ENCODE measurements at regions of chr7 and their contacts with region 1.

Region 1: GRCh38 chr7:38858259-38859165 is 50.5 kb downstream of the VPS41 start:
- DNase-seq: no peak
- ATAC-seq: no peak
- H3K4me3 ChIP-seq: no peak overlapping the region
- H3K4me3 Mint-ChIP-seq: no peak overlapping the region
- H3K27ac ChIP-seq: no peak overlapping the region
- H3K27ac Mint-ChIP-seq: no peak overlapping the region
- H3K4me1 ChIP-seq: peaks cover 24 to 31% of the 10 kb centered on the region in 2 donors
- H3K4me1 Mint-ChIP-seq: peaks cover 35% of the 10 kb centered on the region
- H3K27me3 ChIP-seq: no peaks in the 10 kb centered on the region
- H3K27me3 Mint-ChIP-seq: no peaks in the 10 kb centered on the region
- CTCF ChIP-seq: no peak

Region 2: DNA sequence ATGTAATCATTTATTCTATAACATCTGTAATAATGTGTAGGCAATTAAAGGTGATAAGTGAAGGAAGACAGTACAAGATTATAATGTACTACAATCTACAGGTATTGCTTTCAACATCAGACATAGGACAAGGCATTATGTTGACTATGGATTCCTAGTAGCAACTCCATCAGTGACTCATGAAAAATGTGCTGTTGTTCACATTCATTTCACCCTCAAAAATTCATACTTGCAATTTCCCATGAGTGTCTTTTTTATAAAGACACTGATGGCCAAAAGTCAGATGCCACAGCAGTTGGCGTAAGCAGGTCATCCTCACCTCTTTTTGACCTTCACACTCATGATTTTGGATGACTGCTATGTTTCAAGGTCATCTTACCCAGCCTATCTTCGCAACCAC is 127.3 kb before region 1 on chr7:
- CTCF ChIA-PET with region 1: no interaction called
- POLR2A ChIA-PET with region 1: no interaction called
- intact Hi-C with region 1: no loop called
- DNase-seq: no peak
- ATAC-seq: no peak
- H3K4me3 ChIP-seq: no peak overlapping the region
- H3K4me3 Mint-ChIP-seq: no peak overlapping the region
- H3K27ac ChIP-seq: no peak overlapping the region
- H3K27ac Mint-ChIP-seq: no peak overlapping the region
- H3K4me1 ChIP-seq: no peaks in the 10 kb centered on the region
- H3K4me1 Mint-ChIP-seq: no peaks in the 10 kb centered on the region
- H3K27me3 ChIP-seq: no peaks in the 10 kb centered on the region
- H3K27me3 Mint-ChIP-seq: no peaks in the 10 kb centered on the region
- CTCF ChIP-seq: no peak

Region 3: GRCh38 chr7:38825721-38826440 is 32.6 kb before region 1 on chr7:
- CTCF ChIA-PET with region 1: no interaction called
- POLR2A ChIA-PET with region 1: no interaction called
- intact Hi-C with region 1: no loop called
- DNase-seq: no peak
- ATAC-seq: peak; percentile 31
- H3K4me3 ChIP-seq: no peak overlapping the region
- H3K4me3 Mint-ChIP-seq: peak overlapping the region; percentile 46
- H3K27ac ChIP-seq: peak overlapping the region in 1 of 2 donors; percentile 19
- H3K27ac Mint-ChIP-seq: no peak overlapping the region
- H3K4me1 ChIP-seq: peaks cover 10% of the 10 kb centered on the region in 2 donors
- H3K4me1 Mint-ChIP-seq: peaks cover 22% of the 10 kb centered on the region
- H3K27me3 ChIP-seq: no peaks in the 10 kb centered on the region
- H3K27me3 Mint-ChIP-seq: no peaks in the 10 kb centered on the region
- CTCF ChIP-seq: no peak

Region 4: GRCh38 chr7:38839851-38840250 is 18.7 kb before region 1 on chr7:
- CTCF ChIA-PET with region 1: no interaction called
- POLR2A ChIA-PET with region 1: no interaction called
- intact Hi-C with region 1: no loop called
- DNase-seq: no peak
- ATAC-seq: no peak
- H3K4me3 ChIP-seq: no peak overlapping the region
- H3K4me3 Mint-ChIP-seq: no peak overlapping the region
- H3K27ac ChIP-seq: no peak overlapping the region
- H3K27ac Mint-ChIP-seq: no peak overlapping the region
- H3K4me1 ChIP-seq: peaks cover 0 to 4% of the 10 kb centered on the region in 2 donors
- H3K4me1 Mint-ChIP-seq: peaks cover 32% of the 10 kb centered on the region
- H3K27me3 ChIP-seq: no peaks in the 10 kb centered on the region
- H3K27me3 Mint-ChIP-seq: no peaks in the 10 kb centered on the region
- CTCF ChIP-seq: no peak

Region 5: DNA sequence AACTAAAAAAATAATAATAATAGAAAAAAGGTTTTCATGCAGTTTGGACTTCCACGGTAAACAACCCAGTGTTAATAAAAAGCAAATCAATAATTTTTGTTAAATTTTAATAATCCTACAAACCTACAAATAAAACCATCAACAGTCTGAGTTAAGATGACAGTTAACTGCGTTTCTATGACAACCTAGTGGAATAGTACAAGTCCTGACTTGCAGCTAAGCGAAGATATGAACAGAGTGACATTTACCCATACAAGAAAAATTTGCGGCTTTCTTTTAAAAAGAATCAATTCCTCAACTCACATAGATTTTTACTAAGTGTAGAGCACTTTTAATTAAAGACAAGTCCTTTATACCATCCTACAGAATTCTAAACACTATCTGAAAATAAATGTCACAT is 14.9 kb after region 1 on chr7:
- CTCF ChIA-PET with region 1: interaction called, 5 read pairs
- POLR2A ChIA-PET with region 1: no interaction called
- intact Hi-C with region 1: loop called (anchors 2 kb)
- DNase-seq: no peak
- ATAC-seq: no peak
- H3K4me3 ChIP-seq: no peak overlapping the region
- H3K4me3 Mint-ChIP-seq: no peak overlapping the region
- H3K27ac ChIP-seq: no peak overlapping the region
- H3K27ac Mint-ChIP-seq: no peak overlapping the region
- H3K4me1 ChIP-seq: peaks cover 21 to 27% of the 10 kb centered on the region in 2 donors
- H3K4me1 Mint-ChIP-seq: peaks cover 60% of the 10 kb centered on the region
- H3K27me3 ChIP-seq: no peaks in the 10 kb centered on the region
- H3K27me3 Mint-ChIP-seq: no peaks in the 10 kb centered on the region
- CTCF ChIP-seq: no peak